ENCODE measurements at regions of chr15 and their contacts with region 1.

Region 1: GRCh38 chr15:51229907-51230330 is 108.5 kb downstream of the CYP19A1 start:
- DNase-seq: no peak
- H3K4me3 Mint-ChIP-seq: no peak overlapping the region
- H3K27ac Mint-ChIP-seq: no peak overlapping the region
- H3K4me1 Mint-ChIP-seq: peaks cover 6% of the 10 kb centered on the region
- H3K27me3 Mint-ChIP-seq: peaks cover 6% of the 10 kb centered on the region

Region 2: GRCh38 chr15:50590288-50590687 is 639.6 kb before region 1 on chr15:
- CTCF ChIA-PET with region 1: no interaction called
- intact Hi-C with region 1: no loop called
- DNase-seq: no peak
- H3K4me3 Mint-ChIP-seq: no peak overlapping the region
- H3K27ac Mint-ChIP-seq: no peak overlapping the region
- H3K4me1 Mint-ChIP-seq: no peaks in the 10 kb centered on the region
- H3K27me3 Mint-ChIP-seq: no peaks in the 10 kb centered on the region

Region 3: DNA sequence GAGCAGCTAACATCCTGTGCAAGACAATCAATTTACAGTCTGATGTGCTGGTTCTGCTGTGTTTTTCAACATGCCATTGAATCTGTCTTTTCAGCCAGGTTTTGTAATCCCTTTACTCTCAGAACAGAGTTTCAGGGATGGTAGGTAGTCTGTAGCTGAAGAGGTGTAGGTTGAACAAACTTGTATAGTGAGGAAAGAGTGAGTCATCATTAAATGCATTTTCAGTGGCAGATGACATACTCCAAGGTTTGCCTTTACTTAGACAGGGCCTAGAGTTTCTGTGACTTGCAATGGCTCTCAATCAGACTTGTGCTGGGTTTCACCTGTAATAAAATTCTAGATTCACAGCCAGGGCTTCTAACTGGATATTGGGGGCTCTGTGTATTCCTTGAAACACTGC is 13.8 kb after region 1 on chr15:
- CTCF ChIA-PET with region 1: no interaction called
- intact Hi-C with region 1: no loop called
- DNase-seq: no peak
- H3K4me3 Mint-ChIP-seq: no peak overlapping the region
- H3K27ac Mint-ChIP-seq: no peak overlapping the region
- H3K4me1 Mint-ChIP-seq: peaks cover 8% of the 10 kb centered on the region
- H3K27me3 Mint-ChIP-seq: peaks cover 15% of the 10 kb centered on the region

Region 4: GRCh38 chr15:51267703-51268083 is 37.8 kb after region 1 on chr15:
- CTCF ChIA-PET with region 1: no interaction called
- intact Hi-C with region 1: loop called (anchors 5 kb)
- DNase-seq: no peak
- H3K4me3 Mint-ChIP-seq: no peak overlapping the region
- H3K27ac Mint-ChIP-seq: no peak overlapping the region
- H3K4me1 Mint-ChIP-seq: peaks cover 5% of the 10 kb centered on the region
- H3K27me3 Mint-ChIP-seq: peaks cover 32% of the 10 kb centered on the region

Measured in activated naive CD4-positive, alpha-beta T cell treated with anti-CD3 and anti-CD28 coated beads for 36 hours (primary cell).